SK-N-SH (cell line): ENCODE measurements at regions of chr5 and their contacts with region 1.

Region 1: GRCh38 chr5:141475625-141476131 is at the start of gene PCDHGC3:
- DNase-seq: peak; percentile 90
- H3K4me3 ChIP-seq: peak within 1 kb of the TSS; percentile 82 to 85
- H3K27ac ChIP-seq: peak within 1 kb of the TSS; percentile 92 to 94
- H3K4me1 ChIP-seq: peaks cover 6 to 34% of the 10 kb centered on the region in 2 experiments; a peak in 3 of 4 replicates
- H3K27me3 ChIP-seq: no peaks in the 10 kb centered on the region
- CTCF ChIP-seq: peak; percentile 45
- EP300 ChIP-seq: peak in 1 of 2 experiments; percentile 38; a peak in 1 of 4 replicates
- RAD21 ChIP-seq: peak; percentile 85
- polyA plus RNA-seq, gene PCDHGC3: 55.8 and 97.0 TPM in 2 replicates

Region 2: GRCh38 chr5:141362719-141363118 is 113.0 kb before region 1 on chr5:
- CTCF ChIA-PET with region 1: no interaction called
- POLR2A ChIA-PET with region 1: no interaction called
- DNase-seq: no peak
- H3K4me3 ChIP-seq: no peak overlapping the region
- H3K27ac ChIP-seq: no peak overlapping the region
- H3K4me1 ChIP-seq: no peaks in the 10 kb centered on the region
- H3K27me3 ChIP-seq: no peaks in the 10 kb centered on the region
- CTCF ChIP-seq: no peak
- EP300 ChIP-seq: no peak
- RAD21 ChIP-seq: no peak

Region 3: DNA sequence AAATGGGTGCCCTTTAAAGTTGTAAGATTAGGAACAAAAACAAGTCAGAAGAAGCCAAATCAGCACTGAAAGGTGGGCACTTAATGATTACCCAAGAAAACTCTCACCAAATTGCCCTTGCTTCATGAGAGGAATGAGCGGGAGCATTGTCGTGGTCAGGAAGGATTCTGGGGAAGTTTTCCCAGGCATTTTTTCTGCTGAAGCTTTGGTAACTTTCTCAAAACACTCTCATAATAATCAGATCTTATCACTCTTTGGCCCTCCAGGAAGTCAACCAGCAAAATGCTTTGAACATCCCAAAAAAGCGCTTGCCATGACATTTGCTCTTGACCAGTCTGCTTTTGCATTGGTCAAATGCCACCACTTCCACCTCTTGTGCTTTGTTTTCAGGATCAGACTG is 10.3 kb before region 1 on chr5:
- CTCF ChIA-PET with region 1: interaction called, 16 read pairs
- POLR2A ChIA-PET with region 1: no interaction called
- DNase-seq: no peak
- H3K4me3 ChIP-seq: no peak overlapping the region
- H3K27ac ChIP-seq: peak overlapping the region in 1 of 2 experiments; percentile 36; a peak in 1 of 4 replicates
- H3K4me1 ChIP-seq: no peaks in the 10 kb centered on the region
- H3K27me3 ChIP-seq: no peaks in the 10 kb centered on the region
- CTCF ChIP-seq: no peak
- EP300 ChIP-seq: no peak
- RAD21 ChIP-seq: no peak

Region 4: DNA sequence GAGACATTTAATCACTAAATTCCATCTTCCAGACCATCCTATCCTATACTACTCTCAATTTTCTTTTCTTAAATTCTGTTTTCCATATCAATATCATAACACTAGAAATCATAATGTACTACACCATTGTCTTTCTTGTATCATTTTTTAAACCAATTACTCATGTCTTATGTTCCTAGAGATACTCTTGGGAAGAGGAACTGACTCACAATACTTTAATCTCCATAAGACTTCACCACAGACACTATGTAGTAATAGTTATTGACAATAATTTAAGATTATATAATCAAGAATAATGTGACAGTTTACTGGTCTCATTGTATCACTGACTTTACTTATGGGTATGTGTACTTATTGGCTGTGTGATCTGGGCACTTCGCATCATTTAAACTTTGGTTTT is 57.0 kb after region 1 on chr5:
- CTCF ChIA-PET with region 1: interaction called, 12 read pairs
- POLR2A ChIA-PET with region 1: no interaction called
- DNase-seq: no peak
- H3K4me3 ChIP-seq: no peak overlapping the region
- H3K27ac ChIP-seq: peak overlapping the region in 1 of 2 experiments; percentile 7; a peak in 1 of 4 replicates
- H3K4me1 ChIP-seq: peaks cover 18 to 36% of the 10 kb centered on the region in 2 experiments
- H3K27me3 ChIP-seq: no peaks in the 10 kb centered on the region
- CTCF ChIP-seq: no peak
- EP300 ChIP-seq: no peak
- RAD21 ChIP-seq: no peak